MCF 10A (cell line): ENCODE measurements at regions of chr2 and their contacts with region 1.

Region 1: DNA sequence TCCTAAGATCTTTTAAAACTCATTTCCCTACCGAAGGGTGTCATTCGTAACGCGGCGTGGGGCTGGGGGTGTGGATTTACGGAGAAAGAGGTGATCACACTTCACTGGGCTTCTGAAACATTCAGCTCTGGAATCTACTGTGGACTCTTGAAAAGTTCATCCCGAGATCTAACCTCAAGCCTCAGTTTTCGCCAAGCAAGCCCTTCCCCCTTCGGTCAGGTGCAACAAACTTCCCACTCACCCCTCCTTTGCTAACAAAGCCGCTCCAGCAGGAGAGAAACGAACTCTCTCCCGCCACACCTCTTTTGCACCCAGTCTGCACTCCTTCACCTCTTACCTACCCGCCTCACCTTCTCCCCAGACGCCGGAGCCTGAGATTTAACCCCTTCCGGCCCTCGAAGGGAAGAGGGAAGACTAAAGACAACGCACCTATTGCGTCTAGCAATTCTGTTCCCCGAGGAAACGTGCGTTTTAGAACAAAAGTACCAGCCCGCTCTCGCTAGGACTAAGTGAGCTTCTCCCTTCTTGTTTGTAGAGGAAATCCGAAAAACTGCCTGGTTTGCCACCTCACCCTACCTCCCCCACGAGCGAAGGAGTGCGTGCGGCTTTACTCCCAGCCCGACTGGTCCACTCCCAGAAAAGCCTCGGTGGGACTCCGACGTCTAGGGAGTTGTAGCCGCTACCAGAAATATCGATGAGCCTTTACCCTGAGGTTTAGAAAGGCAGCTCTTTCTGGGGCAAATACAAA is 538 bp upstream of the PEX13 start:
- DNase-seq: peak; percentile 92
- H3K4me3 Mint-ChIP-seq: peak overlapping the region; percentile 91
- H3K27ac Mint-ChIP-seq: peak overlapping the region; percentile 97
- H3K4me1 Mint-ChIP-seq: peaks cover 6% of the 10 kb centered on the region
- H3K27me3 Mint-ChIP-seq: no peaks in the 10 kb centered on the region
- CTCF ChIP-seq: no peak

Region 2: GRCh38 chr2:60867848-60868247 is 149.1 kb before region 1 on chr2:
- CTCF ChIA-PET with region 1: no interaction called
- POLR2A ChIA-PET with region 1: no interaction called
- intact Hi-C with region 1: no loop called
- DNase-seq: no peak
- H3K4me3 Mint-ChIP-seq: no peak overlapping the region
- H3K27ac Mint-ChIP-seq: no peak overlapping the region
- H3K4me1 Mint-ChIP-seq: no peaks in the 10 kb centered on the region
- H3K27me3 Mint-ChIP-seq: no peaks in the 10 kb centered on the region
- CTCF ChIP-seq: no peak

Region 3: GRCh38 chr2:60881047-60881932 is 135.7 kb before region 1 on chr2 and contains the start of gene REL:
- CTCF ChIA-PET with region 1: no interaction called
- POLR2A ChIA-PET with region 1: interaction called, 135 read pairs
- intact Hi-C with region 1: no loop called
- DNase-seq: peak; percentile 90
- H3K4me3 Mint-ChIP-seq: peak within 1 kb of the TSS; percentile 83
- H3K27ac Mint-ChIP-seq: peak within 1 kb of the TSS; percentile 96
- H3K4me1 Mint-ChIP-seq: peaks cover 10% of the 10 kb centered on the region
- H3K27me3 Mint-ChIP-seq: no peaks in the 10 kb centered on the region
- CTCF ChIP-seq: no peak
- total RNA-seq, gene REL: 11.3 and 12.6 TPM in 2 replicates

Region 4: DNA sequence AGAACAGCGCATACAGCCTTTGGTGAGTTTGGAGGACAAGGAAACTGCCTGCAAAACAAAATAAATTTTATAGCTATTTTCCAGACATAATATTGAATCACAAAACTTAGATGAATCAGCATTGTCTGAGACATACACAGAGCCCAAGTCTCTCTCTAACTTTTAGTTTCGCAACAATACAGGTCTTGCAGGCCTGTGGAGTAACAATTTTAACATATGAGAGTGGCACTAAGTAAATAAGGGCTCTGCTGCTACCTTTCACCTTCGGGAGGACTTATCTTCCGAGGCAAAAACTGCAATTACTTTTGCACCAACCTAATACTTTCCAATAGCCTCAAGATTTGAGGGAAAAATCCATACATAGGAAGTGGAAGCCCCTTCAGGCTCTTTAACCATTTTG is 55.5 kb before region 1 on chr2:
- CTCF ChIA-PET with region 1: interaction called, 3 read pairs
- POLR2A ChIA-PET with region 1: interaction called, 88 read pairs
- intact Hi-C with region 1: no loop called
- DNase-seq: peak; percentile 84
- H3K4me3 Mint-ChIP-seq: no peak overlapping the region
- H3K27ac Mint-ChIP-seq: peak overlapping the region; percentile 71
- H3K4me1 Mint-ChIP-seq: peaks cover 21% of the 10 kb centered on the region
- H3K27me3 Mint-ChIP-seq: no peaks in the 10 kb centered on the region
- CTCF ChIP-seq: no peak

Region 5: GRCh38 chr2:60998628-60999545 is 18.1 kb before region 1 on chr2:
- CTCF ChIA-PET with region 1: interaction called, 3 read pairs
- POLR2A ChIA-PET with region 1: interaction called, 14 read pairs
- intact Hi-C with region 1: no loop called
- DNase-seq: peak; percentile 66
- H3K4me3 Mint-ChIP-seq: no peak overlapping the region
- H3K27ac Mint-ChIP-seq: no peak overlapping the region
- H3K4me1 Mint-ChIP-seq: no peaks in the 10 kb centered on the region
- H3K27me3 Mint-ChIP-seq: no peaks in the 10 kb centered on the region
- CTCF ChIP-seq: peak; percentile 61

Region 6: GRCh38 chr2:61029533-61029932 is 12.6 kb after region 1 on chr2:
- CTCF ChIA-PET with region 1: no interaction called
- POLR2A ChIA-PET with region 1: interaction called, 37 read pairs
- intact Hi-C with region 1: no loop called
- DNase-seq: no peak
- H3K4me3 Mint-ChIP-seq: no peak overlapping the region
- H3K27ac Mint-ChIP-seq: no peak overlapping the region
- H3K4me1 Mint-ChIP-seq: no peaks in the 10 kb centered on the region
- H3K27me3 Mint-ChIP-seq: no peaks in the 10 kb centered on the region
- CTCF ChIP-seq: no peak

Region 7: GRCh38 chr2:61144697-61145268 is 127.8 kb after region 1 on chr2:
- CTCF ChIA-PET with region 1: no interaction called
- POLR2A ChIA-PET with region 1: interaction called, 16 read pairs
- intact Hi-C with region 1: no loop called
- DNase-seq: peak; percentile 98
- H3K4me3 Mint-ChIP-seq: peak overlapping the region; percentile 78
- H3K27ac Mint-ChIP-seq: peak overlapping the region; percentile 84
- H3K4me1 Mint-ChIP-seq: no peaks in the 10 kb centered on the region
- H3K27me3 Mint-ChIP-seq: no peaks in the 10 kb centered on the region
- CTCF ChIP-seq: no peak

Region 8: DNA sequence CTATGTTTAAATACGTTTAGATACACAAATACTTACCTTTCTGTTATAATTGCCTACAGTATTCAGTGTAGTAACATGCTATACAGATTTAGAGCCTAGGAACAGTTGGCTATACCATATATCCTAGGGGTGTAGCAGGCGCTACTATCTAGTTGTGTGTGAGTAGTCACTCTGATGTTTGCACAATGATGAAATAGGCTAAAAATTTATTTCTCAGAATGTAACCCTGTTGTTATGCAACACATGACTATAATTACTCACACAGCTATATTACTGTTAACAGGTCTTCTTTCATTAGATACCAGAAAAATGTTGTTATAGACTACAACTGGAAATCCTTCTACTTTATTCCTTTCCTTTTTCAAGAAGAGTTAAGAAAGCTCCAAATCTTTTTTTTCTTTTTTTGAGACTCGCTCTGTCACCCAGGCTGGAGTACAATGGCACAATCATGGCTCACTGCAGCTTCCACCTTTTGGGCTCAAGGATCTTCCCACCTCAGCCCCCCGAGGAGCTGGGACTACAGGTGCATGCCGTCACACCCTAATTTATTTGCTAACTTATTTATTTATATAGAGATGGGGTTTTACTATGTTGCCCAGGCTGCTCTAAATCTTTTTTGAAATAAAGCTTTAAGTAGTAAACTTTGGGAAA is 193.5 kb after region 1 on chr2:
- CTCF ChIA-PET with region 1: no interaction called
- POLR2A ChIA-PET with region 1: interaction called, 16 read pairs
- intact Hi-C with region 1: no loop called
- DNase-seq: peak; percentile 82
- H3K4me3 Mint-ChIP-seq: no peak overlapping the region
- H3K27ac Mint-ChIP-seq: peak overlapping the region; percentile 60
- H3K4me1 Mint-ChIP-seq: no peaks in the 10 kb centered on the region
- H3K27me3 Mint-ChIP-seq: no peaks in the 10 kb centered on the region
- CTCF ChIP-seq: no peak